ENCODE measurements at regions of chr14 and their contacts with region 1.

Region 1: GRCh38 chr14:52706724-52707706 is at the start of gene PSMC6:
- DNase-seq: peak; percentile 94
- ATAC-seq: peak; percentile 99
- H3K4me3 ChIP-seq: peak within 1 kb of the TSS; percentile 83 to 94 (median 88)
- H3K4me3 Mint-ChIP-seq: peak within 1 kb of the TSS; percentile 98
- H3K27ac ChIP-seq: peak within 1 kb of the TSS; percentile 67 to 90
- H3K27ac Mint-ChIP-seq: peak within 1 kb of the TSS; percentile 98
- H3K4me1 ChIP-seq: peaks cover 16% of the 10 kb centered on the region in 2 donors
- H3K4me1 Mint-ChIP-seq: peaks cover 24% of the 10 kb centered on the region
- H3K27me3 ChIP-seq: no peaks in the 10 kb centered on the region
- H3K27me3 Mint-ChIP-seq: no peaks in the 10 kb centered on the region
- CTCF ChIP-seq: no peak
- total RNA-seq, gene PSMC6: 75.3 and 92.2 TPM in 2 replicates

Region 2: DNA sequence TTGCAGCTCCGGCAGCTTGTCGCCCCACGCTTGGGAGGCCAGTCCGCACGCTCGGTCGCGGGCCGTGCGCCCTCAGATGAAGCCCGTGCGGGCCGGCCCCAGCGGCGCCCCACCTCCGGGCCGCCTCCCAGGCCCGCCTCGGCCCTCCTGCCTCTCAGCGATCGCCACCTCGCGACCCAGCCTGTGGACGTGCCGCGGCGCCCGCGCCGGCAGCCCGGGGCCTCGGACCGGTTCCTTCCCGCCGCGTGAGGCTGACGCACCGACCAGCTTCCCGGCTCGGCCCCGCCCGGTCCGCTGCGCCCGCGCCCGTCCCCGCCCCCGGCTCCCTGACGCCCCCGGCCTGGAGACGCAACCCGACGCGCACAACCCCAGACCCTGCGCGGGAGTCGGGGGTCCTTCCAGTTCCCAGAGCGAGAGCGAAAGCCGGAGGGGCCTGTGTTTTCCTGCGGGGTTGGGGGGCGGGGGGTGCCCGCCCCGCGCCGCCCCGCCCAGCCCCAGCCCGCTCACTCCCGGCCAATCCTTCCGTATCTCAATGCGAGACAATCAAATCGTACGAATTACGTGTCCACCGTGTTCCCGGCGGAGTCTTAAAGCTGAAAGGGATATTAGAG is 11.4 kb before region 1 on chr14 and contains the start of gene ERO1A:
- CTCF ChIA-PET with region 1: interaction called, 5 read pairs
- POLR2A ChIA-PET with region 1: no interaction called
- intact Hi-C with region 1: loop called (anchors 1 kb)
- DNase-seq: peak; percentile 79
- ATAC-seq: peak; percentile 77
- H3K4me3 ChIP-seq: peak within 1 kb of the TSS; percentile 86 to 94 (median 89)
- H3K4me3 Mint-ChIP-seq: peak within 1 kb of the TSS; percentile 96
- H3K27ac ChIP-seq: peak within 1 kb of the TSS; percentile 70 to 87
- H3K27ac Mint-ChIP-seq: peak within 1 kb of the TSS; percentile 93
- H3K4me1 ChIP-seq: peaks cover 5 to 7% of the 10 kb centered on the region in 2 donors
- H3K4me1 Mint-ChIP-seq: peaks cover 26% of the 10 kb centered on the region
- H3K27me3 ChIP-seq: no peaks in the 10 kb centered on the region
- H3K27me3 Mint-ChIP-seq: no peaks in the 10 kb centered on the region
- CTCF ChIP-seq: no peak
- total RNA-seq, gene ERO1A: 29.7 and 32.8 TPM in 2 replicates

Region 3: DNA sequence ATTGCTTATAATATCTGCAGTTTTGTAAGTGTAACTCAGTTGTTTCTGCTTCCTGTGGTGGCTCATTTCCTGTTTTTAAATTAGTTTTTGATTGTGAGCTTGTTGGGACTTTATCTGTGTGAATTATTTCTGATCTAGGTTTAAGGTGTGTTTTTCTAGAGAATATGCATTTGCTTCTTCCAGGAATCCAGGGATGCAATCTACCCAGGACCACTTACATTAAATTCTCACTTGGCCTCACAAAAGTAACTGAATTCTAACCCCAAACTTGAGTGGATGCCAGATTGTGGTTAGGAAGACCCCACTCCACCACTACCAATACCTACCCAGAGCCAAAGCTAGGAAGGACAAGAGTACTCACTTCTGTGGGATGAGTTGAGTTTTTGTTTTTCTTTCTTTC is 34.9 kb after region 1 on chr14:
- CTCF ChIA-PET with region 1: interaction called, 5 read pairs
- POLR2A ChIA-PET with region 1: no interaction called
- intact Hi-C with region 1: loop called (anchors 1 kb)
- DNase-seq: peak; percentile 20
- ATAC-seq: no peak
- H3K4me3 ChIP-seq: peak overlapping the region in 4 of 5 experiments; percentile 2 to 56 (median 38)
- H3K4me3 Mint-ChIP-seq: peak overlapping the region; percentile 66
- H3K27ac ChIP-seq: peak overlapping the region; percentile 72 to 93
- H3K27ac Mint-ChIP-seq: peak overlapping the region; percentile 80
- H3K4me1 ChIP-seq: peaks cover 22 to 26% of the 10 kb centered on the region in 2 donors
- H3K4me1 Mint-ChIP-seq: peaks cover 36% of the 10 kb centered on the region
- H3K27me3 ChIP-seq: no peaks in the 10 kb centered on the region
- H3K27me3 Mint-ChIP-seq: no peaks in the 10 kb centered on the region
- CTCF ChIP-seq: no peak

Region 4: DNA sequence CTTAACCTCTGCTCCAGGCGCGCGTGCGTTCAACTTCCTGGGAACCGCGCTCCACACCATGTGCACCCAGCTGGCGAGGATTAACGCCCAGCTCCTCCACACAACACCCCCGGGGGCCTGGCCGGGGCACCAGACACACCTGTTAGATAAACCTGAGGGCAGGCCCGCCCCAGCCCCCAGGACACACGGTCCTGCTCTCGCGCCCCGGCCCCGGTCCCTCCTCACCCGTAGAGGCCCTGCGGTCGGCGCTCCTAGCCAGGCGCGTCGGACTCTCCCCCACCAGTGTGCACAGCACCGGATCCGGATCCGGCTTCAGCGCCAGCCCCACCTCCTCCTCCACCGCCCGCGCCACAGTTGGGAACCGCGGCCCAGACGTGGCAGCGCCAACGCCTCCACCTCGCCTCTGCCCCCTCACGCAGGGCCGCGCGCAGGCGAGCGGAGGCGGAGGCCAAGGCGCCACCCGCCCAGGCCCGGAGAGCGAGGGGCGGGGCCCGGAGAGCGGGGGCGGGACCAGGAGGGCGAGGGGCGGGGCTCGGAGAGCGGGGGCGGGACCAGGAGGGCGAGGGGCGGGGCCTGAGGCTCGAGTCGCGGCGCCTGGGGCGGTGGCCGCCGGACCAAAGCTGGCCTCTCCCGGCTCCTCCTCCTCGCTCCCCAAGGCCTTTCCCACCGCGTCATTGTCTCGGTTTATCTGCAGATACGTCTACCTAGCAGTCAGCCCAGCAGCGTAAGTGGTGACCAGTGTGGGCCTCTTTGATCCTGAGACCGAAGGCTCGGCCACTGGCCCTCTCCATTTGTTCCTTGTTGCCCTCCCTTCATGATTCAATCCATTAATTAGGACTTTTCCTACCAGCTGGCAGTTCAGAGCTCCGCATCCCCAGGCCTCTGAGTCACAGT is 84.4 kb after region 1 on chr14 and contains the start of gene GNPNAT1:
- CTCF ChIA-PET with region 1: no interaction called
- POLR2A ChIA-PET with region 1: interaction called, 7 read pairs
- intact Hi-C with region 1: loop called (anchors 1 kb)
- DNase-seq: peak; percentile 89
- ATAC-seq: peak; percentile 96
- H3K4me3 ChIP-seq: peak within 1 kb of the TSS; percentile 58 to 87 (median 80)
- H3K4me3 Mint-ChIP-seq: peak within 1 kb of the TSS; percentile 89
- H3K27ac ChIP-seq: peak within 1 kb of the TSS; percentile 35 to 58
- H3K27ac Mint-ChIP-seq: peak within 1 kb of the TSS; percentile 86
- H3K4me1 ChIP-seq: peaks cover 14 to 20% of the 10 kb centered on the region in 2 donors
- H3K4me1 Mint-ChIP-seq: peaks cover 26% of the 10 kb centered on the region
- H3K27me3 ChIP-seq: no peaks in the 10 kb centered on the region
- H3K27me3 Mint-ChIP-seq: no peaks in the 10 kb centered on the region
- CTCF ChIP-seq: no peak
- total RNA-seq, gene GNPNAT1: 7.8 and 8.3 TPM in 2 replicates

Measured in B cell (primary cell).